Right ventricle myocardium inferior (tissue), 1 donor: ENCODE measurements at regions of chr1 and their contacts with region 1.

Region 1: GRCh38 chr1:244603498-244603897 is 49.4 kb upstream of the DESI2 start:
- DNase-seq: no peak
- ATAC-seq: no peak

Region 2: GRCh38 chr1:244461245-244462071 is 142.0 kb before region 1 on chr1 and contains the start of gene CATSPERE:
- intact Hi-C with region 1: no loop called
- DNase-seq: peak; percentile 95
- ATAC-seq: peak; percentile 99
- total RNA-seq, gene CATSPERE: 0.54 TPM

Region 3: DNA sequence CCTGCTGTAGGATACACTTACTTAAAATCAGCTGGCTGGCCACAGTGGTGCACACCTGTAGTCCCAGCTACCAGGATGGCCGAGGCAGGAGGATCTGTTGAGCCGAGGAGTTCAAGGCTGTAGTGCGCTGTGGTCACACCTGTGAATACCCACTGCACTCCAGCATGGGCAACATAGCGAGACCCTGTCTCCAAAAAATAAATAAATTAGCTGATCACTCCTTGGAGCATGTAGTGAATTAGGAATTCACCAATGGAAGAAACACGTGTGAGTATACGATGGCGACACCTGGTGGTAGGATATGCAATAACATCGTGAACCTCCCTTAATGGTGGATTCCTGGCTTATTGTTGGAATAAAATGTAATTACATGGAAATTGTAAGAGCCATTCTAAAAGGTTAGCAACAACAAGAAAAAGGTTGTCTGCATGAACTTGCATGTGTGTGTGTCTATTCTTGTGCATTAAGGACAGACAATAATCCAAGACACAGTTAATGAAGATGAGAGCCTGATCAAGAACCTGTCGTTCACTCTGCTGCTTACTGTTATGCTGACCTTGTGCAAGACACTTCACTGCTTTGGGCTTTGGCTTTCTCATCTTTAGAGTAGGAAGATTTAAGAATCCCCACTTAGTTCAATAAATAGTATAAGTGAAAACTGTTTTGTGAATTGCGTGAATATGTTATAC is 193.4 kb after region 1 on chr1:
- intact Hi-C with region 1: loop called (anchors 1 kb)
- DNase-seq: no peak
- ATAC-seq: no peak

Region 4: DNA sequence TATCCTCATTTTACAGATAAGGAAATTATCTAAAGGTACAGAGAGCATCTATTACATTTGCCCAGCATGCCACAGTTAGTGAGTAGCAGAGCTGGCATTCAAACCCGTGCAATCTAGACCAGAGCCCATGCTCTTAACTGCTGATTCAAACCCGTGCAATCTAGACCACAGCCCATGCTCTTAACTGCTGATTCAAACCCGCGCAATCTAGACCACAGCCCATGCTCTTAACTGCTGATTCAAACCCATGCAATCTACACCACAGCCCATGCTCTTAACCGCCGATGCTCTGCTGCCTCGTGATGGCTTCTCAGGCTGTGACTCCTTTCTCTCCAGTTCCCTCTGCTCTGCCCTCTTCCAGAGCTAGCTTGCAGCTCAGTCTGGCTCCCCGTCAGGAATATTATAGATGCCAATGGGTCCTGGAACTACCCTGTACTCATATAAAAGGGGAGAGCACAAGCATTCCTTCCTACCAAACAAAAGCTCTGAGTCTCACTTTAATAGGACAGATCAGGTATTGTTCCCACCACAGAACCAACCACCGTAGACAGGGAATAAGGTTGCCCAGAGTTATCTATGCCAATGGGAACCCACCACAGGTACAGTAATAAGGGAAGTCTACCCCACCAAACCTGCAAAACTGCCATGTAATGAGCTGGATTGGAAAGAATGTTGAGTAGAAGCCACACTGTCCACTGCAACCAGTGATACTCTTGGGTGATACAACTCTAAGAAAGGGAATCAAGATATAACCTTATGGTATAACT is 1825.2 kb after region 1 on chr1:
- intact Hi-C with region 1: no loop called
- DNase-seq: no peak
- ATAC-seq: no peak